GM10248 (cell line): ENCODE measurements at regions of chr2 and their contacts with region 1.

Region 1: GRCh38 chr2:70668432-70668831 is 99.6 kb downstream of the ADD2 start:
- DNase-seq: no peak
- CTCF ChIP-seq: no peak

Region 2: DNA sequence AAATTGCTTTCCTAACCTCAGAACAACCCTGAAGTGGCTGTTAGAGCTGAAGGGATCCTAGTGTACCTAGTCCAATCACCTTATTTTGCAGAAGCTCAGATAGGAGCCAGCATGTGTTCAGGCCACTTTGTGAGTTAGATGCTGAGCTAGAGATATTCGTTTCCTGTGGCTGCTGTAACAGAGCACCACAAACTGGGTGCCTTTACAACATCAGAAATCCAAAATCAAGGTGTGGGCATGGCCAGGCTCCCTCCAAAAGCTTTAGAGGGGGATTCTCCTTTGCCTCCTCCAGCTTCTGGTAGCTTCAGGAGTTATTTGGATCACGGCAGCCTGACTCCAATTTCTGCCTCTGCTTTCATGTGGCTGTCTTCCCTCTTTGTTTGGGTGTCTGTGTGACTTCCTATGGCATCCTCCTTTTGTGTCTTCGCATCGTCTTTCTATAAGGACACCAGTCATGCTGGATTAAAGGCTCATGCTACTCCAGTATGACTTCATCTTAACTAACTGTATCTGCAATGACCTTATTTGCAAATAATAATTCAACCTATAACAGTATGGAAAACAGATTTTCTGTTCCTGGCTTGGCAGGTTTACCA is 28.5 kb before region 1 on chr2:
- CTCF ChIA-PET with region 1: no interaction called
- POLR2A ChIA-PET with region 1: no interaction called
- DNase-seq: no peak
- CTCF ChIP-seq: no peak

Region 3: DNA sequence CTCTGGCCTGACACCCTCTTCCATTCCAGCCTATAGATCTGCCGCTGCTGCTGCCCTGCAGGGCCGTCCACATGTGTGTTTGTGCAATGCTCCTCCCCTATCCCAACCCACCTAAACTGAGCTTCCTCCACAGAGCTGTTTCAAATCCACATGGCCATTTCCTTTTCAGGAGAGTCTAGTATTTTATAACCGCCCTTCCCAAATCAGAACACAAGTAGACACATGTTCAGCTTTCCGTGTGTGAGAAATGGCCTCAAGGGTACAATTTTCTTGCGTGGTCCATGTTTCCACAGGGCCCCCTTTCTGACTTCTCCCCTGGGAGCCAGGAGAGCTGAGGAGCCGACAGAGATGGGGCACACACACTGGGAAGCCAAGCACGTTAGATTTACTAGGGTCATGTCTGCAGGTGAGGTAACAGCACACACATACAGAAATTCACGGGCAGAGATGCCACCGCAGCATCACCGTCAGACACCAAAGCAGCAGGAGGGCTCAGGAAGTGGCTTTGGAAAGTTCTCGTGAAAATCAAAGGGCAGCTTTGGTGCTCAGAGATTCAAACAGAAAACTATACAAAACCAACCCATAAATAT is 11.9 kb before region 1 on chr2:
- CTCF ChIA-PET with region 1: interaction called, 10 read pairs
- POLR2A ChIA-PET with region 1: no interaction called
- DNase-seq: no peak
- CTCF ChIP-seq: no peak

Region 4: GRCh38 chr2:70686577-70687460 is 18.4 kb after region 1 on chr2:
- CTCF ChIA-PET with region 1: interaction called, 13 read pairs
- POLR2A ChIA-PET with region 1: no interaction called
- DNase-seq: peak; percentile 72
- CTCF ChIP-seq: peak; percentile 42